T-cell (primary cell): ENCODE measurements at regions of chr6 and their contacts with region 1.

Region 1: GRCh38 chr6:163986313-163986712 is 571.8 kb downstream of the QKI start:
- DNase-seq: no peak
- ATAC-seq: no peak
- H3K4me3 ChIP-seq: no peak overlapping the region
- H3K4me3 Mint-ChIP-seq: no peak overlapping the region
- H3K27ac ChIP-seq: no peak overlapping the region
- H3K27ac Mint-ChIP-seq: no peak overlapping the region
- H3K4me1 ChIP-seq: peaks cover 0 to 6% of the 10 kb centered on the region in 2 experiments
- H3K4me1 Mint-ChIP-seq: peaks cover 0 to 9% (median 8%) of the 10 kb centered on the region in 3 donors
- H3K27me3 ChIP-seq: peaks cover 0 to 9% of the 10 kb centered on the region in 2 experiments
- H3K27me3 Mint-ChIP-seq: peaks cover 3 to 5% of the 10 kb centered on the region in 2 donors

Region 2: GRCh38 chr6:163956571-163957407 is 29.5 kb before region 1 on chr6:
- CTCF ChIA-PET with region 1: interaction called in 1 of 2 experiments, 11 read pairs
- POLR2A ChIA-PET with region 1: no interaction called
- DNase-seq: peak in 32 of 35 experiments; percentile 4 to 65 (median 32)
- ATAC-seq: peak in 3 of 4 experiments; percentile 42 to 45 (median 42)
- H3K4me3 ChIP-seq: no peak overlapping the region
- H3K4me3 Mint-ChIP-seq: no peak overlapping the region
- H3K27ac ChIP-seq: no peak overlapping the region
- H3K27ac Mint-ChIP-seq: no peak overlapping the region
- H3K4me1 ChIP-seq: peaks cover 0 to 4% of the 10 kb centered on the region in 2 experiments
- H3K4me1 Mint-ChIP-seq: peaks cover 0 to 4% (median 3%) of the 10 kb centered on the region in 3 donors
- H3K27me3 ChIP-seq: peaks cover 5 to 8% of the 10 kb centered on the region in 2 experiments
- H3K27me3 Mint-ChIP-seq: peaks cover 17 to 34% of the 10 kb centered on the region in 2 donors